ENCODE measurements at regions of chr2 and their contacts with region 1.

Region 1: GRCh38 chr2:169363560-169364150 is 1.3 kb upstream of the LRP2 start:
- DNase-seq: peak; percentile 41
- H3K4me3 Mint-ChIP-seq: peak overlapping the region; percentile 88
- H3K27ac Mint-ChIP-seq: peak overlapping the region; percentile 75
- H3K4me1 Mint-ChIP-seq: peaks cover 31% of the 10 kb centered on the region
- H3K27me3 Mint-ChIP-seq: peaks cover 46% of the 10 kb centered on the region

Region 2: GRCh38 chr2:169034256-169034655 is 329.4 kb before region 1 on chr2:
- intact Hi-C with region 1: no loop called
- DNase-seq: no peak
- H3K4me3 Mint-ChIP-seq: no peak overlapping the region
- H3K27ac Mint-ChIP-seq: no peak overlapping the region
- H3K4me1 Mint-ChIP-seq: peaks cover 5% of the 10 kb centered on the region
- H3K27me3 Mint-ChIP-seq: peaks cover 1% of the 10 kb centered on the region

Region 3: GRCh38 chr2:169446452-169446851 is 82.8 kb after region 1 on chr2:
- intact Hi-C with region 1: no loop called
- DNase-seq: no peak
- H3K4me3 Mint-ChIP-seq: no peak overlapping the region
- H3K27ac Mint-ChIP-seq: no peak overlapping the region
- H3K4me1 Mint-ChIP-seq: no peaks in the 10 kb centered on the region
- H3K27me3 Mint-ChIP-seq: peaks cover 18% of the 10 kb centered on the region

Region 4: DNA sequence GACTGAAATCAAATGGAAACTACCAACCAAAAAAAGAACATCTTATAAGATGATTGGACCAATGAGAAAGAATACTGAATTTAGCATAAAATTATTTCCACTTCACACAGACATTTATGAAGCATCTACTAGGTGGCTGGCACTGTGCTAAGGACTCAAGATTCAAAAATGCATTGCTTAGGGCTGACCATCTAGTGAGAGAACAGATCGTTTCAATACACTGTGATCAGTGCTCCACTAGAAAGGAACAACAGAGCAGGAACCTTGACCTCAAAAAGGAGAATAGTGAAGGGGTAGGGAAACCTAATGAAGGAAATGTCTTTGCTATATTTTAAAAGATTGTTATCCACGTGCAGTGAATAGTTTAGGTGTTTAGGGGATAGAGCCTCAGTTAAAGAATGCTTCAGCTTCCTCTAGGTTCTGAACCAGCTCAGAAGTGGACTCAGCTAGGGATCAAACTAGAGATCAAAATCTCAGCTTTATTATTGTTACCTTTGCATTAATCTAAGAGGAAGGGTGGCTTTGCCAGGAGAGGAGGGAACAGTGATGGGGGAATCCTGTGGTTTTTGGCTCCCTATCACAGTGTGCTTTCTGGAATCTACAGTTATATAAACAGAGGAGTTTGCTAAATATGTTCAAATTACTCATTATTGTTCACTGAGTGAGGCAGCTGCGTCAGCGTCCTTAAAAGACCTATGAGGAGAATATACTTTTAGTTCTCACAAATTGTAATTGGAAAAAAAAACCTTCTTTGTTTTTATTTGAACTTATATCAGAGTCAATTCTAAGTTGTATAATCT is 99.4 kb after region 1 on chr2:
- intact Hi-C with region 1: loop called (anchors 5 kb)
- DNase-seq: no peak
- H3K4me3 Mint-ChIP-seq: no peak overlapping the region
- H3K27ac Mint-ChIP-seq: no peak overlapping the region
- H3K4me1 Mint-ChIP-seq: no peaks in the 10 kb centered on the region
- H3K27me3 Mint-ChIP-seq: no peaks in the 10 kb centered on the region

Region 5: GRCh38 chr2:169562519-169562918 is 198.9 kb after region 1 on chr2:
- intact Hi-C with region 1: no loop called
- DNase-seq: no peak
- H3K4me3 Mint-ChIP-seq: no peak overlapping the region
- H3K27ac Mint-ChIP-seq: no peak overlapping the region
- H3K4me1 Mint-ChIP-seq: no peaks in the 10 kb centered on the region
- H3K27me3 Mint-ChIP-seq: no peaks in the 10 kb centered on the region

Region 6: DNA sequence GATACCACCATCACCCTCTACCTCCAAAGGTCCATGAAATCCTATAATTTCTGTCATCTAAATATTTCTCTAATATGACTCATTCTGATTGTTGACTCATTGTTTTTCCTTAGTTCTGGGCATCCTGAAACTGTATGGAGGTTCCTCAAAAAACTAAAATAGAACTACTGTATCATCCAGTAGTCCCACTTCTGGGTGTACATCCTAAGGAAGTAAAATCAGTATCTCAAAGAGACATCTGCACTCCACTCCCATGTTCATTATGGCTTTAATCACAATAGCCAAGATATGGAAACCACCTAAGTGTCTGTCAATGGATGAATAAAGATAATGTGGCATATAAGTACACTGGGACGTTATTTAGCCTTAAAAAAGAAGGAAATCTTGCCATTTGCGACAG is 688.5 kb after region 1 on chr2:
- intact Hi-C with region 1: no loop called
- DNase-seq: no peak
- H3K4me3 Mint-ChIP-seq: no peak overlapping the region
- H3K27ac Mint-ChIP-seq: no peak overlapping the region
- H3K4me1 Mint-ChIP-seq: peaks cover 6% of the 10 kb centered on the region
- H3K27me3 Mint-ChIP-seq: no peaks in the 10 kb centered on the region